ENCODE measurements at regions of chr1 and their contacts with region 1.

Region 1: GRCh38 chr1:89987170-89987819 is 7.6 kb upstream of the ZNF326 start:
- DNase-seq: peak; percentile 73
- CTCF ChIP-seq: peak; percentile 84

Region 2: DNA sequence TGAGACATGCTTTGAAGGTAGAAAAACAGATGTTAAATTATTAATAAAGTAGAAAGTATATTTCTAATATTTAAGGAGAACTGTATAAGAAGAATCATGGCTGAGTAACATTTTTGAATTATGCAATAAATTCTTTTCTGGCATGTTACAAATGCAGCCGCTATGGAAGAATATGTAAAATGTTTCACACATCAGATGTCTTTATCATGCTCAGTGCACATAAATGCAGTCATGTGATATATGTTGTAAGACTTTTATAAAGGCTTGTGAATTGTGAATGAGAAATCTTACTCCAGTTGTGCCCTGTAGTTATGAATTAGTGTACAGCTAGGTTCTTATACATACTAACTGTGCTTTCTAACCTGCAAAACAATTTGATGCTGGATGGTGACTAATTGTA is 409.1 kb before region 1 on chr1:
- CTCF ChIA-PET with region 1: no interaction called
- POLR2A ChIA-PET with region 1: no interaction called
- DNase-seq: no peak
- CTCF ChIP-seq: no peak

Region 3: DNA sequence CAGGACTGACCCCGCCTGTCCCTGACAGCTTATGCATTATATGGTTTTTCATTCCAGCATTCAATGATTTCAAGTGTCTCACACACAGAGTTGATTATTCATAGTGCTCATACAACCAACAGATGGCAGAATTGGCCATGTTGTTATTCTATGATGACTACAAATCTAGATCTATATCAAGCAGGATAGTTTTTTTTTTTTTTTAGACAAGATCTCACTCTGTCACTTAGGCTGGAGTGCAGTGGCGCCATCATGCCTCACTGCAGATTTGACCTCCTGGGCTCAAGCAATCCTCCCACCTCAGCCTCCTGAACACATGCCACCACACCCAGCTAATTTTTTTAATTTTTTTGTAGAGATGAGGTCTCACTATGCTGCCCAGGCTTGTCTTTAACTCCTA is 206.6 kb before region 1 on chr1:
- CTCF ChIA-PET with region 1: interaction called, 11 read pairs
- POLR2A ChIA-PET with region 1: no interaction called
- DNase-seq: no peak
- CTCF ChIP-seq: no peak

Region 4: GRCh38 chr1:89804642-89805237 is 182.6 kb before region 1 on chr1:
- CTCF ChIA-PET with region 1: interaction called, 22 read pairs
- POLR2A ChIA-PET with region 1: no interaction called
- DNase-seq: peak; percentile 71
- CTCF ChIP-seq: peak; percentile 96

Region 5: DNA sequence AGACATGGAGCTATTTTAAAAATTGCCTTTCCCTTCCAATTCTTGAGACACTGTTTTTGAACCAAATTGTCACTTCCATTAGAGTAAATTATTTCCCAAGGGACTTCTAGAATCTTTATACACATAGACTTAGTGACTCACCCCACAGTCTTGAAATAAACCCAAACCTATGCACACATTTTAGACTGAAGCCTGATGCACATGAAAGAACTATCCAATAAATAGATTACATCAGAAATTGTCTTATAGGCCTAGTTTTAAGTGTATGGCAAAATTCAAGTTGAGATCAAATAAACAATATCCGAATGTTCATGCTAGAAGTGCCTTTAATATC is 24.6 kb before region 1 on chr1:
- CTCF ChIA-PET with region 1: no interaction called
- POLR2A ChIA-PET with region 1: no interaction called
- DNase-seq: no peak
- CTCF ChIP-seq: no peak

Region 6: GRCh38 chr1:89974701-89975470 is 12.4 kb before region 1 on chr1:
- CTCF ChIA-PET with region 1: interaction called, 27 read pairs
- POLR2A ChIA-PET with region 1: no interaction called
- DNase-seq: no peak
- CTCF ChIP-seq: no peak

Region 7: DNA sequence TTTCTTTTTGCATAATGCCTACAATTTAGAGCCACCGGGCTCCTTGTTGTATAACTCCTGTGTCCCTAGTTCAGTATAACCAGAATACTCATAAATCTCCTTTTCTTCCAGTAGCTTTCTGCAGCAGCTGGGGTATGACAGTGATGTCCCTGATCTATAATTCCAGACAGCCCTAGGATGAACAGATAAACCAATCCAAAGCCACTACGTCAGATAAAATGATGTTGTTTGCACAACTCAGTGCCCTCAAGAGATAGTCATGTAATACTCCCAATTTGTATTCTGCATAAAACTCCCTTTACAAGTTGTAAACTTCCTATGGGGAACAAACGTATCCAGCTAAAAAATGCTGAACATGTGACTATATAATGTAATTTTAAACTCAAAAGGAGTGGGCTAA is 52.4 kb after region 1 on chr1:
- CTCF ChIA-PET with region 1: no interaction called
- POLR2A ChIA-PET with region 1: no interaction called
- DNase-seq: no peak
- CTCF ChIP-seq: no peak

Region 8: DNA sequence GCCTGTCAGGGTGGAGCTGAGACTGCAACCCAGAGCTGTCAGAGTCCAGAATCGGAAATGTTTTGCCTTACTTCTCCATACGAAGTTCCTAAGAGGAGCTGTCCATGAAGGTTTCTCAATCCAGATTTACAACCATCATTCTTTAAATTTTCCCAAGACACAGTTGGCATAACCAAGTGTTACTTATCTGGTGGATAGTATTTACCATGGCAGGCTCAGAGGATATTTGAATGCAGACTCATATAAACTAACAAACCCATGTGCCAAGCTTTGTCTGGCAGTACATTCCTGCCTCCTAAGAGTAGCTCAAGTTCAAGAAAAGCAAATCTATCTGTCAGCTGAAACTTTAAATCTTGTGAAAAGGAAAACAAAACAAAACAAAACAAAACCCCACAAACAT is 275.5 kb after region 1 on chr1:
- CTCF ChIA-PET with region 1: no interaction called
- POLR2A ChIA-PET with region 1: no interaction called
- DNase-seq: no peak
- CTCF ChIP-seq: no peak